Naive thymus-derived CD8-positive, alpha-beta T cell (primary cell): ENCODE measurements at regions of chr12 and their contacts with region 1.

Region 1: GRCh38 chr12:132908145-132909044 is 21.0 kb upstream of the CHFR start:
- DNase-seq: peak; percentile 87 to 99 (median 96)
- ATAC-seq: peak; percentile 91 to 92
- H3K4me3 Mint-ChIP-seq: peak overlapping the region; percentile 82 to 99 (median 94)
- H3K27ac Mint-ChIP-seq: peak overlapping the region; percentile 93 to 100 (median 97)
- H3K4me1 Mint-ChIP-seq: peaks cover 13 to 29% (median 22%) of the 10 kb centered on the region in 4 donors
- H3K27me3 Mint-ChIP-seq: peaks cover 0 to 3% (median 0%) of the 10 kb centered on the region in 5 donors

Region 2: GRCh38 chr12:132622437-132623334 is 285.7 kb before region 1 on chr12:
- POLR2A ChIA-PET with region 1: no interaction called
- DNase-seq: peak in 1 of 10 donors; percentile 52
- ATAC-seq: no peak
- H3K4me3 Mint-ChIP-seq: no peak overlapping the region
- H3K27ac Mint-ChIP-seq: peak overlapping the region in 2 of 10 donors; percentile 33 to 56
- H3K4me1 Mint-ChIP-seq: peaks cover 3 to 6% (median 5%) of the 10 kb centered on the region in 4 donors
- H3K27me3 Mint-ChIP-seq: peaks cover 4 to 11% (median 6%) of the 10 kb centered on the region in 5 donors

Region 3: DNA sequence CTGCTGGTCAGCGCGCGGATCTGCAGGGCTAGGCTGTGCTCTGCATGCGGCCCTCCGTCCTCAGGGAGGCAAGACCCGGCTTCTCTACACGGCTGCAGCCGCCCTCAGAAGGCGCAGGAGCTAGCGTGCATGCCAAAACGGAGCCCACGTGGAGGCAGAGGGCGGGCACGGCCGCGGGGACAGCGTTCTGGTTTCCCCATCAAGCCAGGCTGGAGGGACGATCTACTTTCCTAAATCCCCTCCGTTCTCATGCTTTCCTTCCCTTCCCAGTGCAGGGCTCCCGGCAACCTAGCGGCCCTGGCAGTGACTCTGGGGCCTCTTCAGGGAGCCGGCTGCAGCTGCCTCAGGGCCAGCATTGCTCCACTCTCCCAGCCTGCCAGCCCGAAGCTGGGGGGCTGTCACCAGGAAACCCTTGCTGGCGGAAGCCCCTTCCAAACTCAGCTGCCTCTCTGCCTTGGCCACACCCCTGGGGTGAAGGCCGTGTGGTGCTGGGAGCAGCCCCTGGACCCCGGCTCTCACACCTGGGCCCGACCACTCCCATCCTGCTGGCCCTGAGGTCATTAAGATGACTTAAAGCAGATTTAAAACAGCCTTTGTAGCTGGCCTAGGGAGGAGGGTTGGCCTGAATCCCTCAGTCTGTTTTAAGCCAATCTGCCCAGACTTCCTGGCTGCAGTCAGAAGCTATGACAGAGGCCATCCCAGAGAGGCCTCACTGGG is 70.5 kb before region 1 on chr12:
- POLR2A ChIA-PET with region 1: interaction called, 19 read pairs
- DNase-seq: no peak
- ATAC-seq: peak in 1 of 2 donors; percentile 3
- H3K4me3 Mint-ChIP-seq: peak overlapping the region; percentile 7 to 89 (median 85)
- H3K27ac Mint-ChIP-seq: peak overlapping the region in 9 of 10 donors; percentile 65 to 95 (median 94)
- H3K4me1 Mint-ChIP-seq: peaks cover 32 to 58% (median 43%) of the 10 kb centered on the region in 4 donors
- H3K27me3 Mint-ChIP-seq: no peaks in the 10 kb centered on the region

Region 4: DNA sequence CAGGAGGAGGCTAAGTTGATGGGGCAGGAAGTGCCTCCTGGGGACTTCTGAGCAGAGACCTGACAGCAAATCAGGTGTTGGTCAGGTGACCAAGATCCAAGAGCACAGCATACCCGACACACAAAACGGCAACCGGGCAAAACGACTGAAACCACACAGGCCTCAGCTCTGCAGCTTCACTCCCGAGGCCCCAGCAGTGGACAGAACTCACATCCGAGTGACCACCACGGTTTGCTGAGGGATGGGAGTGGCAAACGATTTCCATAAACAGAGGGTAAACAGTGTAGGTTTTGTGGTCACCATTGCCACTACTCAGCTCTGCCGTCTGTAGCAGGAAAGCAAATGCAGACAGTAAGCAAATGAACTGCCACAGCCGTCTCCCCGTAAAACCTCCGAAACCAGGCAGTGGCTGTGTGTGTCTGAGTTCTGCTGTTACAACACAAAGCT is 35.4 kb before region 1 on chr12:
- POLR2A ChIA-PET with region 1: interaction called, 16 read pairs
- DNase-seq: peak in 8 of 10 donors; percentile 7 to 69 (median 40)
- ATAC-seq: peak; percentile 79 to 86
- H3K4me3 Mint-ChIP-seq: peak overlapping the region; percentile 64 to 83 (median 78)
- H3K27ac Mint-ChIP-seq: peak overlapping the region; percentile 34 to 96 (median 95)
- H3K4me1 Mint-ChIP-seq: peaks cover 9 to 43% (median 25%) of the 10 kb centered on the region in 4 donors
- H3K27me3 Mint-ChIP-seq: no peaks in the 10 kb centered on the region

Region 5: GRCh38 chr12:132940071-132940719 is 31.8 kb after region 1 on chr12:
- POLR2A ChIA-PET with region 1: no interaction called
- DNase-seq: no peak
- ATAC-seq: no peak
- H3K4me3 Mint-ChIP-seq: no peak overlapping the region
- H3K27ac Mint-ChIP-seq: no peak overlapping the region
- H3K4me1 Mint-ChIP-seq: no peaks in the 10 kb centered on the region
- H3K27me3 Mint-ChIP-seq: no peaks in the 10 kb centered on the region

Region 6: GRCh38 chr12:132956011-132956788 is 47.8 kb after region 1 on chr12 and contains the start of gene ZNF605:
- POLR2A ChIA-PET with region 1: interaction called, 11 read pairs
- DNase-seq: peak; percentile 78 to 90 (median 86)
- ATAC-seq: peak; percentile 93 to 96
- H3K4me3 Mint-ChIP-seq: peak within 1 kb of the TSS; percentile 92 to 98 (median 97)
- H3K27ac Mint-ChIP-seq: peak within 1 kb of the TSS; percentile 89 to 97 (median 95)
- H3K4me1 Mint-ChIP-seq: peaks cover 26 to 47% (median 39%) of the 10 kb centered on the region in 4 donors
- H3K27me3 Mint-ChIP-seq: no peaks in the 10 kb centered on the region
- polyA plus RNA-seq, gene ZNF605: 0.46 to 0.72 (median 0.65) TPM

Region 7: GRCh38 chr12:132986001-132986912 is 77.9 kb after region 1 on chr12 and contains the start of gene ZNF26:
- POLR2A ChIA-PET with region 1: interaction called, 15 read pairs
- DNase-seq: peak; percentile 77 to 94 (median 84)
- ATAC-seq: peak; percentile 92 to 97
- H3K4me3 Mint-ChIP-seq: peak within 1 kb of the TSS; percentile 84 to 97 (median 94)
- H3K27ac Mint-ChIP-seq: peak within 1 kb of the TSS; percentile 96 to 98 (median 97)
- H3K4me1 Mint-ChIP-seq: peaks cover 22 to 39% (median 32%) of the 10 kb centered on the region in 4 donors
- H3K27me3 Mint-ChIP-seq: peaks cover 0 to 7% (median 5%) of the 10 kb centered on the region in 5 donors
- polyA plus RNA-seq, gene ZNF26: 10.6 to 19.2 (median 15.6) TPM